Esophagus muscularis mucosa (tissue), 4 donors: ENCODE measurements at regions of chr20 and their contacts with region 1.

Region 1: GRCh38 chr20:36861875-36862801 is 13.8 kb upstream of the TLDC2 start:
- DNase-seq: peak; percentile 98
- H3K4me3 ChIP-seq: peak overlapping the region; percentile 71 to 89 (median 80)
- H3K27ac ChIP-seq: peak overlapping the region; percentile 94 to 96 (median 94)
- H3K4me1 ChIP-seq: peaks cover 50 to 74% (median 69%) of the 10 kb centered on the region in 4 donors
- H3K27me3 ChIP-seq: no peaks in the 10 kb centered on the region
- CTCF ChIP-seq: no peak
- EP300 ChIP-seq: no peak
- POLR2A ChIP-seq: peak; percentile 17

Region 2: DNA sequence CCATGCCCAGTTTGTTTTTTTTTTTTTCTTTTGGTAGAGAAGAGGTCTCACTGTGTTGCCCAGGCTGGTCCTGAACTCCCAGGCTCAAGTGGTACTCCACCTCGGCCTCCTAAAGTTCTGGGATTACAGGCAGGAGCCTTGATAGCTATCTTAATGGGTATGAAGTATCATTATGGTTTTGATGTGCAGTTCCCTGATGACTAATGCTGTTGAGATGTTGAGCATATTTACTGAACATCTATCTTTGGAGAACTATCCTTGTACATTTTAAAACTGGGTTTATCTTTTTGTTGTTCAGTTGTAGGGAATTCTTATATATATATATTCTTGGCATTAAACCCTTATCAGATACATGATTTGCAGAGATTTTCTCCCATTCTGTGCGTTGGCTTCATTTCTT is 342.2 kb before region 1 on chr20:
- intact Hi-C with region 1: no loop called
- DNase-seq: no peak
- H3K4me3 ChIP-seq: no peak overlapping the region
- H3K27ac ChIP-seq: no peak overlapping the region
- H3K4me1 ChIP-seq: peaks cover 0 to 65% (median 59%) of the 10 kb centered on the region in 4 donors
- H3K27me3 ChIP-seq: no peaks in the 10 kb centered on the region
- CTCF ChIP-seq: no peak
- EP300 ChIP-seq: no peak
- POLR2A ChIP-seq: no peak

Region 3: GRCh38 chr20:36745927-36746659 is 116.0 kb before region 1 on chr20 and contains the start of gene NDRG3:
- intact Hi-C with region 1: loop called (anchors 10 kb)
- DNase-seq: peak; percentile 98
- H3K4me3 ChIP-seq: peak within 1 kb of the TSS; percentile 83 to 98 (median 97)
- H3K27ac ChIP-seq: peak within 1 kb of the TSS; percentile 72 to 83 (median 76)
- H3K4me1 ChIP-seq: peaks cover 13 to 24% (median 20%) of the 10 kb centered on the region in 4 donors
- H3K27me3 ChIP-seq: peaks cover 0 to 3% (median 0%) of the 10 kb centered on the region in 4 donors
- CTCF ChIP-seq: peak in 1 of 3 experiments; percentile 13
- EP300 ChIP-seq: no peak
- POLR2A ChIP-seq: no peak
- total RNA-seq, gene NDRG3: 17.1 to 22.8 (median 22.3) TPM

Region 4: DNA sequence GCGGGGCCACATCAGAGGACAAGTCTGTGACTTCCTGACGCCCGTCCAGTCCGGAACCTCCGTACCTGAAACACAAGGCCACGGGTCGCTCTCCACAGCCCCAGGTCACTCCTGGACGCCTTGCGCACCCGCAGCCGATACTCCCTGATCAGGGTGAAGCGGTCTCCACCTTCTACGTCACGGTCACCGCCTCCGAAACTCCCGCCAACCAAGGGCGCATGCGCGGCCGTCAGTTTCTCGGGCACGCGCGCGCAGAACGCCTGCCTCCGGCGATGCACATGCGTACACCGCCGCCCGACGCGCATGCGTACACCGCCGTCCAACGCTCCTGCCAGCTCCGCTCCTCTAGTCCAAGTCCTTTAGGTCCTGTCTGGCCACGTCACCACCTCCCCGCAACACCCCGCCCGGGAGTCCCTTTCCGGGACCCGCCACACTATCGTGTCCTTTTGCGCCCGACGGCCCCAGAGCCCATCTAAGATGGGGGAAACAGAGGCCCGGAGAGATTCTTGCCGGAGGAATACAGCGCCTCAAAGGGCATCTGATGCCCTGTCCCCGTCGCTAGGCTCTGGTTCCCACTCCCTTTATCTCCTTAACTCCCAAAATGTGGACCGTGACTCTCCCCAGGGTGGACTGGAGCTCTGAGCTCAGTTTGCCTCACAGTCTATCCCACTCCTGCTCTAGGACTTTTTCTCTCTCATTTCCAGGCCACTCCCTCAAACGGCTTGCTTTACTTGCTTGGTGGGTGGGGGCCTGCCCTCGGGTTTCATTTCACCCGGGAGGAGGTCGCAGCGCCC is 88.3 kb before region 1 on chr20 and contains the start of gene DSN1:
- intact Hi-C with region 1: loop called (anchors 10 kb)
- DNase-seq: peak; percentile 99
- H3K4me3 ChIP-seq: peak within 1 kb of the TSS; percentile 72 to 81 (median 76)
- H3K27ac ChIP-seq: peak within 1 kb of the TSS; percentile 91 to 96 (median 94)
- H3K4me1 ChIP-seq: peaks cover 18 to 52% (median 41%) of the 10 kb centered on the region in 4 donors
- H3K27me3 ChIP-seq: no peaks in the 10 kb centered on the region
- CTCF ChIP-seq: no peak
- EP300 ChIP-seq: no peak
- POLR2A ChIP-seq: peak; percentile 22
- total RNA-seq, gene DSN1: 5.1 to 7.5 (median 6.3) TPM

Region 5: GRCh38 chr20:36792422-36792821 is 69.7 kb before region 1 on chr20:
- intact Hi-C with region 1: no loop called
- DNase-seq: no peak
- H3K4me3 ChIP-seq: no peak overlapping the region
- H3K27ac ChIP-seq: no peak overlapping the region
- H3K4me1 ChIP-seq: peaks cover 0 to 13% (median 10%) of the 10 kb centered on the region in 4 donors
- H3K27me3 ChIP-seq: no peaks in the 10 kb centered on the region
- CTCF ChIP-seq: peak in 2 of 3 experiments; percentile 36 to 42
- EP300 ChIP-seq: no peak
- POLR2A ChIP-seq: no peak

Region 6: GRCh38 chr20:36812594-36813463 is 49.3 kb before region 1 on chr20:
- intact Hi-C with region 1: loop called (anchors 5 kb)
- DNase-seq: no peak
- H3K4me3 ChIP-seq: no peak overlapping the region
- H3K27ac ChIP-seq: peak overlapping the region in 1 of 4 donors; percentile 0
- H3K4me1 ChIP-seq: peaks cover 0 to 19% (median 5%) of the 10 kb centered on the region in 4 donors
- H3K27me3 ChIP-seq: no peaks in the 10 kb centered on the region
- CTCF ChIP-seq: no peak
- EP300 ChIP-seq: no peak
- POLR2A ChIP-seq: no peak

Region 7: DNA sequence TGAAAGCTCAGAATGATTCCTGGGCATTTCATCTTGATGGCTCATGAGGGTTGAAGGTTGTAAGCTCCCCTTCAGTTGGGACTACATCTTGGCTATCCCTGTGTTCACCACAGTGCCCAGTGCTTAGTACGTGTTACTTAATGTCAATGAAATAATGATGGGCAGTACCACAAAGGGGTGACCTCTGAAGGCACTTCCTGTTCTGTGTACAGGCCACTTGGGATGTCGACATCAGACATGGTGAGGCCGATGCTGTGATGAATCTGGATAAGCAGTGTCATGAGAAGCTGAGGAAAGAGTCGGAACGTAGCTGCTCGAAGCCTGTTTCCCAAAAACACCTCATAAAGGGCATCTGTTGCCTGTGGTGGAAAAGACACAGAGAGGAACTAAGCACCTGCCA is 261.3 kb after region 1 on chr20:
- intact Hi-C with region 1: no loop called
- DNase-seq: no peak
- H3K4me3 ChIP-seq: no peak overlapping the region
- H3K27ac ChIP-seq: no peak overlapping the region
- H3K4me1 ChIP-seq: no peaks in the 10 kb centered on the region
- H3K27me3 ChIP-seq: no peaks in the 10 kb centered on the region
- CTCF ChIP-seq: no peak
- EP300 ChIP-seq: no peak
- POLR2A ChIP-seq: no peak

Region 8: GRCh38 chr20:37475252-37475651 is 613.1 kb after region 1 on chr20:
- intact Hi-C with region 1: no loop called
- DNase-seq: no peak
- H3K4me3 ChIP-seq: no peak overlapping the region
- H3K27ac ChIP-seq: no peak overlapping the region
- H3K4me1 ChIP-seq: no peaks in the 10 kb centered on the region
- H3K27me3 ChIP-seq: no peaks in the 10 kb centered on the region
- CTCF ChIP-seq: no peak
- EP300 ChIP-seq: no peak
- POLR2A ChIP-seq: no peak